ENCODE measurements at regions of chr12 and their contacts with region 1.

Region 1: DNA sequence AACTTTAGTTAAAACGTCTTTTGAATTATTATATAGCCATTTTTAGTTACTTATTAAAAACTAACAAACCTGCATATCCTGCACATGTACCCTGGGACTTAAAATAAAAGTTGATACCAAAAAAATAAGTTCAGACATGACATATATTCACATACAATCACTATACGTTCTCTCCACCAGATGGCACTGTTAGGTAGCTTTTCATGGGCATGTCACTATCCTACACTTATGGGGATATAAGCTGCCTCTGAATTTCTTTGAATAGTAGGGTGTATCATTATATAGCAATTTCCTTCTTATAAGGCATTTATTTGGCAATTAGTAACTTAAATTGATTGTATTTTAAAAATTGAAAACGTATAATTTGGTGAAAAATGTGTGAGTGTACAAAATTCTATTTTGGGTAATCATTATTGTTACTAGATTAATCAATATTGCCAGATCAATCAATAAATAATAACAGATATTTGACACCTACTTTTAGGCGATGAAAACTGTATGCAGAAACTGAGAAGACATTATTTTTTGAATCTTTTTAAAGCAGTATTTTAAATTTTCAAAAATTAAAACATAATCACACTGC is 31.8 kb upstream of the OR10A7 start:
- H3K4me3 ChIP-seq: no peak overlapping the region
- H3K27ac ChIP-seq: no peak overlapping the region
- H3K4me1 ChIP-seq: no peaks in the 10 kb centered on the region
- CTCF ChIP-seq: peak; percentile 37; the same call in 1 of the 2 replicates

Region 2: GRCh38 chr12:55619354-55620138 is 430.5 kb after region 1 on chr12:
- CTCF ChIA-PET with region 1: interaction called, 38 read pairs
- POLR2A ChIA-PET with region 1: no interaction called
- H3K4me3 ChIP-seq: no peak overlapping the region
- H3K27ac ChIP-seq: no peak overlapping the region
- H3K4me1 ChIP-seq: no peaks in the 10 kb centered on the region
- CTCF ChIP-seq: peak; percentile 77

Region 3: GRCh38 chr12:55659486-55660385 is 470.7 kb after region 1 on chr12:
- CTCF ChIA-PET with region 1: interaction called, 16 read pairs
- POLR2A ChIA-PET with region 1: no interaction called
- H3K4me3 ChIP-seq: no peak overlapping the region
- H3K27ac ChIP-seq: no peak overlapping the region
- H3K4me1 ChIP-seq: no peaks in the 10 kb centered on the region
- CTCF ChIP-seq: peak; percentile 64